ENCODE measurements at regions of chr10 and their contacts with region 1.

Region 1: DNA sequence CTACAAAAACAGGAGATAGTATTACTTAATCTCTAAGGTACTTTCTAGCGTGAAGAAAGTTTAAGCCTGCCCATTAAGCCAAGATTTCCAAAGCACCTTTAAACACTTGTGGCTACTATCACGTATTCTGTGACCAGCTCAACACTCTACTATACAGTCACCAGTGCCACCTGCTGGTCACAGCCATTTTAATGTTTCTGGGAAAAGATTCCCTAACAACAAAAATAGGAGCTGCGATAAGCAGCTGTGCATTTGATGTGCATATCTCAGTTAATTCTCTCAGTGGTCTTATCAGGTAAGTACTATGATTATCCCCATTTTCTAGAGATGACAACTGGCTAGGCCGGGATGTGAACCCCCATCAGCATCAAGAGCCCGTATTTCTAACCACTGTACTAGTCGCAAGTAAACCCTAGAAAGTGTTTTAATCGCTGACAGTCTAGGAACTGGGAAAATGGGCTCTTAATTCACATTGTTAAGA is 860 bp downstream of the SEC31B start:
- DNase-seq: peak; percentile 48 to 56 (median 52)
- H3K4me3 ChIP-seq: no peak overlapping the region
- H3K4me3 Mint-ChIP-seq: no peak overlapping the region
- H3K27ac ChIP-seq: no peak overlapping the region
- H3K27ac Mint-ChIP-seq: peak overlapping the region in 2 of 7 donors; percentile 43 to 82
- H3K4me1 ChIP-seq: no peaks in the 10 kb centered on the region
- H3K4me1 Mint-ChIP-seq: peaks cover 6 to 8% (median 7%) of the 10 kb centered on the region in 4 donors
- H3K27me3 ChIP-seq: no peaks in the 10 kb centered on the region
- H3K27me3 Mint-ChIP-seq: no peaks in the 10 kb centered on the region

Region 2: DNA sequence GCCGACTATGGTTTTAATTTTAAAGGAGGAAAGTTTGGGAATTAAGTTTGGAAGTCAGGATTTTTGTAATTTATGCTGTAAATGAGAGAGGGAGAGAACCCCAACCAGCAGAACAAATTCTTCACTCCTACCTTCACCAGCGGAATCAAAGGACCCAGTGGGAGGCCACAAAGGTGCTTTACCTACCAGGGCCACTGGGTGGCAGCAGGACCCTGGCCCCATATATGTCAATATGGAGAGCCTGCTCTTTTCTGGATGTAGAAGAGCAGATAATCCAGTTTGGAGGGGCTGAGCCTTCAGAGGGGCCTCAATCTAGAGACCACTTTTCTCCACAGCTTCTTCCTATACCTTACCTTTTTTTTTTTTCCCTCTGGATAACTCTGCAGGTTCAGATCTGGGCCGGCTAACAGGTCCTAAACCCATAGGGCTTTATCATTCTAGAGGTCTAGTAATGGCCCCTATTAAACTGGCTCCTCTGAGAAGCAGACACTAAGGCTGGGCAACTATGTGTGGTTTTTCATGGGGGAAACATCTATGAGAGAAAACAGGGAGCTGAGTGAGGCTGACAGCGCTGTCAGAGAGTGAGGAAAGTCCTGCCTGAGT is 180.3 kb before region 1 on chr10:
- CTCF ChIA-PET with region 1: interaction called, 122 read pairs
- POLR2A ChIA-PET with region 1: no interaction called
- intact Hi-C with region 1: loop called (anchors 1 kb)
- DNase-seq: peak; percentile 68 to 74 (median 69)
- H3K4me3 ChIP-seq: no peak overlapping the region
- H3K4me3 Mint-ChIP-seq: no peak overlapping the region
- H3K27ac ChIP-seq: no peak overlapping the region
- H3K27ac Mint-ChIP-seq: peak overlapping the region in 2 of 7 donors; percentile 3 to 35
- H3K4me1 ChIP-seq: no peaks in the 10 kb centered on the region
- H3K4me1 Mint-ChIP-seq: no peaks in the 10 kb centered on the region
- H3K27me3 ChIP-seq: no peaks in the 10 kb centered on the region
- H3K27me3 Mint-ChIP-seq: peaks cover 0 to 2% of the 10 kb centered on the region in 2 donors

Region 3: DNA sequence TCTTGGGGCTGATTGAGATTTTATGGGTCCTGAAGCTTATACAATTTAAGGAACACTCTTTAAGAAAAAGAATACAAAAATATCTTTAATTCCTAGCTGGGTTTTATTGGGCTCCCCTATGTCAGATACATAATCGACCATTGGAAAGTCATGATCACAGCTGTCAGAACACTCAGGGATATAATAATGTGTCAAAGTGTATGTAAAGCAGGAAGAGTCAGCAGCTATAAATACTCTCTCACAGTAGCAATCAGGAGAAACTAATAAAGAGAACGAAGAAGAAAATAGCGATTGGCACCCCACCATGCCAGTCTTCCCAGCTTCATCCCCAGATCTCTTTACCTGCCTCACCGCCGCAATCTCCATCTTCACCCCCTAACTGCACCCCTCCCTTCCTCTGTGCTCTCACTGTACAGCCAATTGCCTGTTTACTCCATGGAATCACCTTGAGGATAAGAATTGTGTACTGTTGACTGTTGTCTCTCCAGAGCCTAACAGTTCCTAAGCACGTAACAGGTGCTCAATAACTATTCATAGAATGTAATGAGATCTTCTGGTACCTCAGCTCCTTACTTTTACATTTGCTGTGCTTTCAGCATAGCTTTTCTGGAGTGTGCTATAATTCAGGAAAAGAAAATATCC is 80.0 kb before region 1 on chr10:
- CTCF ChIA-PET with region 1: interaction called, 69 read pairs
- POLR2A ChIA-PET with region 1: no interaction called
- intact Hi-C with region 1: no loop called
- DNase-seq: no peak
- H3K4me3 ChIP-seq: no peak overlapping the region
- H3K4me3 Mint-ChIP-seq: no peak overlapping the region
- H3K27ac ChIP-seq: no peak overlapping the region
- H3K27ac Mint-ChIP-seq: no peak overlapping the region
- H3K4me1 ChIP-seq: no peaks in the 10 kb centered on the region
- H3K4me1 Mint-ChIP-seq: peaks cover 0 to 1% (median under 1%) of the 10 kb centered on the region in 4 donors
- H3K27me3 ChIP-seq: no peaks in the 10 kb centered on the region
- H3K27me3 Mint-ChIP-seq: peaks cover 1 to 2% of the 10 kb centered on the region in 2 donors

Region 4: DNA sequence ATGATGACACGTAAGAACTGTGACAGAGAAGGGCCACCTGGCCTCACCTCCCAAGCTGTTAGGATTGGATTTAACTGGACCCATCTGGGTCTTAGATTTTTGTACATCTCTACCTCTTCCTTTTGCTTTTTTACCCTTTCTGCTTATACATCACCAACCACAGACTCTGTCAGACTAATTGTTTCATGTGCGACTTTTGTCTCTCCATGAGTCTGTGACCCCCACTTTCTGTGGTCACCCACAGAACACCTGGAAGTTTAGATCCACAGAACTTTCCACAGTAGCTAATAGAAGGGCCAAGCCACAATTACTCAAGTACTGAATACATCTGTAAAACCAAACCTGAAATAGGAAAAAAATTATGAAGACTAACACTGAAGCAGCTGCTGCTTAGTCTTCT is 22.2 kb before region 1 on chr10:
- CTCF ChIA-PET with region 1: interaction called, 27 read pairs
- POLR2A ChIA-PET with region 1: no interaction called
- intact Hi-C with region 1: no loop called
- DNase-seq: no peak
- H3K4me3 ChIP-seq: no peak overlapping the region
- H3K4me3 Mint-ChIP-seq: peak overlapping the region in 1 of 8 donors; percentile 49
- H3K27ac ChIP-seq: no peak overlapping the region
- H3K27ac Mint-ChIP-seq: no peak overlapping the region
- H3K4me1 ChIP-seq: no peaks in the 10 kb centered on the region
- H3K4me1 Mint-ChIP-seq: peaks cover 0 to 7% (median under 1%) of the 10 kb centered on the region in 4 donors
- H3K27me3 ChIP-seq: no peaks in the 10 kb centered on the region
- H3K27me3 Mint-ChIP-seq: no peaks in the 10 kb centered on the region

Region 5: GRCh38 chr10:100535715-100536353 is 17.0 kb after region 1 on chr10 and contains the start of gene HIF1AN:
- CTCF ChIA-PET with region 1: interaction called, 22 read pairs
- POLR2A ChIA-PET with region 1: interaction called, 5 read pairs
- intact Hi-C with region 1: no loop called
- DNase-seq: peak; percentile 92 to 95 (median 94)
- H3K4me3 ChIP-seq: peak within 1 kb of the TSS; percentile 48 to 69
- H3K4me3 Mint-ChIP-seq: peak within 1 kb of the TSS in 1 of 8 donors; percentile 40
- H3K27ac ChIP-seq: peak within 1 kb of the TSS; percentile 77
- H3K27ac Mint-ChIP-seq: peak within 1 kb of the TSS in 3 of 7 donors; percentile 8 to 87 (median 32)
- H3K4me1 ChIP-seq: peaks cover 34% of the 10 kb centered on the region
- H3K4me1 Mint-ChIP-seq: peaks cover 12 to 23% (median 18%) of the 10 kb centered on the region in 4 donors
- H3K27me3 ChIP-seq: no peaks in the 10 kb centered on the region
- H3K27me3 Mint-ChIP-seq: no peaks in the 10 kb centered on the region
- total RNA-seq, gene HIF1AN: 69.6 to 69.8 TPM

Region 6: GRCh38 chr10:100878291-100878910 is 359.6 kb after region 1 on chr10:
- CTCF ChIA-PET with region 1: no interaction called
- POLR2A ChIA-PET with region 1: no interaction called
- intact Hi-C with region 1: no loop called
- DNase-seq: peak in 3 of 5 donors; percentile 13 to 17 (median 14)
- H3K4me3 ChIP-seq: no peak overlapping the region
- H3K4me3 Mint-ChIP-seq: no peak overlapping the region
- H3K27ac ChIP-seq: no peak overlapping the region
- H3K27ac Mint-ChIP-seq: no peak overlapping the region
- H3K4me1 ChIP-seq: no peaks in the 10 kb centered on the region
- H3K4me1 Mint-ChIP-seq: no peaks in the 10 kb centered on the region
- H3K27me3 ChIP-seq: no peaks in the 10 kb centered on the region
- H3K27me3 Mint-ChIP-seq: peaks cover 11 to 23% of the 10 kb centered on the region in 2 donors

Measured in CD4-positive, alpha-beta memory T cell (primary cell).